Head of caudate nucleus (tissue), 42 donors: ENCODE measurements at regions of chr6 and their contacts with region 1.

Region 1: GRCh38 chr6:13120483-13121482 is 207.6 kb downstream of the TBC1D7 start:
- DNase-seq: no peak

Region 2: DNA sequence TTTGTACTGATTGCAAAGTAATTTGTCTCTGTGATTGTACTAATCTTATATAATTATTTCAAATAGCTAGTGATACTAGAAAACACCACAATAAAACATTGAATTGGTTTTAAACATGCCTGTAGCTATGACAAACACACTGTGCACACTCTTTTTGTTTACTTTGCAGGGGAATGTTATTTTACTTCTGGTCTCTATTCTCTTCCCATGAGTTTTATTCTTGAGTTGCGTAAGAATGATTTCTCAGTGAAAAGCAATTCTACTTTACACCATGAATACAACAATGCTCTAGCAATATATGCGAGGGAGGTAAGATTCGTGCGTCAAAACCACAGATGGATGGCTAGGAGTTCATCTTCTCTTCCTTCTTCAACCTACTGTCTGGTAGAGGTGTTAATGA is 472.6 kb before region 1 on chr6:
- intact Hi-C with region 1: loop called (anchors 10 kb)
- DNase-seq: no peak

Region 3: GRCh38 chr6:13146442-13146841 is 25.7 kb after region 1 on chr6:
- intact Hi-C with region 1: no loop called
- DNase-seq: no peak